CD4-positive, alpha-beta T cell (primary cell): ENCODE measurements at regions of chr11 and their contacts with region 1.

Region 1: DNA sequence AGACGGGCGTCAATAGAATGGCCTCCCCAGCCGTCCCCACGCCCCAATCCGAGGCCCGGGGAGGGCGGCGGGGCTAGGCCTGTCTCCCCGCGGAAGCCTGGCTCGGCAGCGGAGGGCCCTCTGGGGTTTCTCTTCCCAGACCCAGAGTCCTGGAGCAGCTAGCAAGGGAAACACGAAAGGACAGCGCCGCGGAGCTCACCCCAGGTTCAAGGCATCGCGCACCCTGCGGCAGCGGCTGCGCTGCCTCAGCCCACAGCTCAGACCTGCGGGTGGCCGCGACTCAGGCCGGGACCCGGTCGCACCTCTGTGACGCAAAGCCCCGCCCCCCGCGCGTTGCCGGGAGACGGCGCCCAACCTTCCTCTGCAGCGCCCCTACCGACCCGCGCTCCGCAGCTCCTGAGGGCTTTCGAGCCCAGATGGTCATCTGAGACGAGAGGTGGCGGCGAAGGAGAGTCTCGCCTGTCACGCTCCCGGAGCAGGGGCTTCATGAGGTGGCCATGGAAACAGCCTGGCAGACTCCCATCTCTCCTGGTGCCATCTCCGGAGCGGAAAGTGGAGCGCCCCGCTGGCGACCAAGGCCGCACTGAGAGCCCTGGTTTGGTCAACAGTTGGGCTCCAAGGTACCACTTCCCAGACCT is at the start of gene RNF141:
- DNase-seq: peak; percentile 85 to 97 (median 94)
- ATAC-seq: peak; percentile 97
- H3K4me3 ChIP-seq: peak within 1 kb of the TSS; percentile 70
- H3K4me3 Mint-ChIP-seq: peak within 1 kb of the TSS; percentile 93
- H3K27ac ChIP-seq: peak within 1 kb of the TSS; percentile 25 to 72
- H3K27ac Mint-ChIP-seq: peak within 1 kb of the TSS; percentile 77
- H3K4me1 ChIP-seq: peaks cover 13% of the 10 kb centered on the region
- H3K4me1 Mint-ChIP-seq: peaks cover 44% of the 10 kb centered on the region
- H3K27me3 ChIP-seq: no peaks in the 10 kb centered on the region
- H3K27me3 Mint-ChIP-seq: no peaks in the 10 kb centered on the region
- CTCF ChIP-seq: peak; percentile 87
- total RNA-seq, gene RNF141: 18.0 to 19.0 TPM

Region 2: DNA sequence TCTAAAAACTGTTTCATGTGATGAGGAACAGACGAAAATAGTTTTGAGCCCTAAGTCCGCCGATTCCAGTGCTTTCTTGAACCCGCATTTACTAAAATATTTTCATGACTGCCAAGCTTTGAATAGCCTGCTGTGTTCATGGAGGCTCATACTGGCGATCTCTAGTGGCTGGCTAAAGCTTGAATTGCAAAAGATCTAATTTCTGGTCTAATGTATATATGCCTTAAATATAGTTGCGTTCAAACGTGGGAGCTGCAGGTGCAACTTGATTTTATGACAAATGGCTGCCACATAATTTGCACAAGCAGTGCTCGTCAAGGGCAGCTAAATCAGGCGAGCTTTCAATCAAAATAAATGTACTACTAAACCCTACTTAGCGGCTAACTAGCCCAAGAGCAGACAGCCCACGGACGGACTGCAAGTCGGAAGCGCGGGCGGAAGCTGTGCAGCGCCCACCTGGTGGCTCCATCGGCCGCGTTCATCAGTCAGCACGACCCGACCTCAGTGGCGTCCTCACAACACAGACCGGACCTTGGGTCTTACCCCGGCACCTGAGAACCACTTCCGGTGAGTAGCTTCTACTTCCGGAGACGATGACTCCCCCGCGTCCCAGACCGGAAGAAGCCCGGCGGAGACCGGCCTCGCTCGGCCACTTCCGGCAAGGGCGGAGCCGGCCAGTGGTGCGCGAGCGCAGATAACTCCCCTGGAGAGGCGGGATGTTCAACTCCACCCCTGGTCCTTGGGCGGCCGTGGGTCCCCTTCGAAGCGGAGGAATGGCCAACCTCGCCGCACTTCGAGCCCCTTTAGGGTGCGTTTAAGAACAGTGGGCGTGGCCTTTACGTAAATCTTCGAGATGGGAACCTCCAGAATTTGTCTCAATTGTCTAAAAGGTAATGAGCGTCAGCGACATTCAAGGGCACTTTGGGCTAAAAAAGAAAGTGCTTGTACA is 1852.4 kb before region 1 on chr11:
- CTCF ChIA-PET with region 1: no interaction called
- POLR2A ChIA-PET with region 1: no interaction called
- intact Hi-C with region 1: loop called in 1 of 2 experiments (anchors 10 kb)
- DNase-seq: peak; percentile 46 to 89 (median 77)
- ATAC-seq: peak; percentile 76
- H3K4me3 ChIP-seq: peak overlapping the region; percentile 73
- H3K4me3 Mint-ChIP-seq: peak overlapping the region; percentile 96
- H3K27ac ChIP-seq: peak overlapping the region; percentile 73 to 84
- H3K27ac Mint-ChIP-seq: peak overlapping the region; percentile 90
- H3K4me1 ChIP-seq: peaks cover 26% of the 10 kb centered on the region
- H3K4me1 Mint-ChIP-seq: peaks cover 43% of the 10 kb centered on the region
- H3K27me3 ChIP-seq: no peaks in the 10 kb centered on the region
- H3K27me3 Mint-ChIP-seq: no peaks in the 10 kb centered on the region
- CTCF ChIP-seq: no peak

Region 3: DNA sequence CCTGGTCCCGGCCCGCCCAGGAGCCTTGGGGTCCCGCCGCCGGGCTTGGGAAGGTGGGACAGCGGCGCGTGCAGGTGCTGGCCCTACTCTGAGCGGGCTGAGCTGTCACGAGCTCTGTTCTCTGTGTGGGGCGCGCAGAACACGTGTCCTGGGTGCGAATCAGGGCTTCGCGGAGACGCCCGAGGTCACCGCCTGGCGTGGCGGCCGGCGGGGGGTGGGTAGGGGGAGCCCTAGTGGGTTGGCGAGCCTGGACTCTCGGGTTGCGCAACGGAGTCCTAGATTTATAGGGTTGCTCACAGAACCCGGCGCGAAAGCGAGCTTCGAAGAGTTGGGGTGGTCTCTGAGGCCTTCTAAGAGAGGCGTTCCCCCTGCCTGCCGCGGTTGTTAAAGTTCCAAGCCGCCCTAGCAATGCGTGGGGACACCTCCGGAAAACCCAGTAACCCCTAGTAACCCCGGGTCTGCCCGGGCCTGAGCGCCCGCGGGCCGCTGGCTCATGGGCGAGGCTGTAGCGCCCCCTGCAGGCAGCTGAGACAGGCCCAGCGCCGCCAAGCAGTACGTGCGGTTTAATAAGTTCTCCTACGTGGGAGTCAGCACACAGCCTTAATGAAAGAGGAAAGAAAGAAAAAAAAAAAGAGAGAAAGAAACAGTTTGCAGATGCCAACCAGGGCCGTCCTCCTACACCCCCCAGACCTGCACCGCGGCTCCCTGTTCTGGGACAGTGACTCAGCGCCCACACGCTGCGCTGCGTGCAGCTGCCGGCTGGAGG is 233.4 kb before region 1 on chr11:
- CTCF ChIA-PET with region 1: interaction called, 3 read pairs
- POLR2A ChIA-PET with region 1: no interaction called
- intact Hi-C with region 1: loop called in 1 of 2 experiments (anchors 10 kb)
- DNase-seq: peak; percentile 70 to 92 (median 80)
- ATAC-seq: peak; percentile 66
- H3K4me3 ChIP-seq: peak overlapping the region; percentile 63
- H3K4me3 Mint-ChIP-seq: peak overlapping the region; percentile 95
- H3K27ac ChIP-seq: no peak overlapping the region
- H3K27ac Mint-ChIP-seq: no peak overlapping the region
- H3K4me1 ChIP-seq: peaks cover 56% of the 10 kb centered on the region
- H3K4me1 Mint-ChIP-seq: peaks cover 40% of the 10 kb centered on the region
- H3K27me3 ChIP-seq: peaks cover 32 to 45% of the 10 kb centered on the region in 2 experiments
- H3K27me3 Mint-ChIP-seq: peaks cover 80% of the 10 kb centered on the region
- CTCF ChIP-seq: peak; percentile 98

Region 4: GRCh38 chr11:10413268-10413667 is 127.8 kb before region 1 on chr11:
- CTCF ChIA-PET with region 1: interaction called, 13 read pairs
- POLR2A ChIA-PET with region 1: interaction called, 13 read pairs
- intact Hi-C with region 1: loop called (anchors 2 to 5 kb)
- DNase-seq: peak; percentile 20 to 78 (median 44)
- ATAC-seq: peak; percentile 92
- H3K4me3 ChIP-seq: no peak overlapping the region
- H3K4me3 Mint-ChIP-seq: no peak overlapping the region
- H3K27ac ChIP-seq: no peak overlapping the region
- H3K27ac Mint-ChIP-seq: no peak overlapping the region
- H3K4me1 ChIP-seq: peaks cover 32% of the 10 kb centered on the region
- H3K4me1 Mint-ChIP-seq: peaks cover 50% of the 10 kb centered on the region
- H3K27me3 ChIP-seq: no peaks in the 10 kb centered on the region
- H3K27me3 Mint-ChIP-seq: no peaks in the 10 kb centered on the region
- CTCF ChIP-seq: peak; percentile 61

Region 5: GRCh38 chr11:10455637-10456487 is 85.2 kb before region 1 on chr11:
- CTCF ChIA-PET with region 1: interaction called, 22 read pairs
- POLR2A ChIA-PET with region 1: interaction called, 18 read pairs
- intact Hi-C with region 1: loop called (anchors 2 to 5 kb)
- DNase-seq: peak; percentile 50 to 87 (median 75)
- ATAC-seq: peak; percentile 71
- H3K4me3 ChIP-seq: peak overlapping the region; percentile 66
- H3K4me3 Mint-ChIP-seq: peak overlapping the region; percentile 93
- H3K27ac ChIP-seq: peak overlapping the region; percentile 63 to 89
- H3K27ac Mint-ChIP-seq: peak overlapping the region; percentile 95
- H3K4me1 ChIP-seq: peaks cover 77% of the 10 kb centered on the region
- H3K4me1 Mint-ChIP-seq: peaks cover 78% of the 10 kb centered on the region
- H3K27me3 ChIP-seq: no peaks in the 10 kb centered on the region
- H3K27me3 Mint-ChIP-seq: no peaks in the 10 kb centered on the region
- CTCF ChIP-seq: no peak

Region 6: GRCh38 chr11:10526974-10527918 is 13.8 kb before region 1 on chr11:
- CTCF ChIA-PET with region 1: interaction called, 21 read pairs
- POLR2A ChIA-PET with region 1: interaction called, 3 read pairs
- intact Hi-C with region 1: no loop called
- DNase-seq: no peak
- ATAC-seq: no peak
- H3K4me3 ChIP-seq: no peak overlapping the region
- H3K4me3 Mint-ChIP-seq: no peak overlapping the region
- H3K27ac ChIP-seq: no peak overlapping the region
- H3K27ac Mint-ChIP-seq: no peak overlapping the region
- H3K4me1 ChIP-seq: no peaks in the 10 kb centered on the region
- H3K4me1 Mint-ChIP-seq: peaks cover 8% of the 10 kb centered on the region
- H3K27me3 ChIP-seq: no peaks in the 10 kb centered on the region
- H3K27me3 Mint-ChIP-seq: no peaks in the 10 kb centered on the region
- CTCF ChIP-seq: no peak

Region 7: DNA sequence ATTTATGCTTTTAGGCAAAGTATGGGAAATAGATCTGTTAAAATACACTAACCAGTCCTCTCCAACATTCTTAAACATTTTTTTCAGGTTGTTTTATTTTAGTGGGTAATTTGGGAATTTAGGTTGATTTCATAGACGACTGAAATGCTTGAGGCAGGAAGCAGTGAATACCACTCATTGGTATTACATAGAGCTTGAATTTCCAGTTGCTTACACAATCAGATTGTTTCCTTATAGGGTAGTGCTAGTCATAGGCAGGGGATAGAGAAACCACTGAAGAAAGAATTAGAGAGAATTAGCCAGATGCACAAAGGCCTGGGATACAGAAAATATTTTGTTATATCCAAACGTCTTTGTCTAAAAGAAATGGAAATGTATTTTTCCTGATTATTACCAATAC is 51.3 kb after region 1 on chr11:
- CTCF ChIA-PET with region 1: no interaction called
- POLR2A ChIA-PET with region 1: no interaction called
- intact Hi-C with region 1: no loop called
- DNase-seq: peak in 2 of 14 experiments; percentile 19 to 26
- ATAC-seq: no peak
- H3K4me3 ChIP-seq: no peak overlapping the region
- H3K4me3 Mint-ChIP-seq: no peak overlapping the region
- H3K27ac ChIP-seq: no peak overlapping the region
- H3K27ac Mint-ChIP-seq: no peak overlapping the region
- H3K4me1 ChIP-seq: no peaks in the 10 kb centered on the region
- H3K4me1 Mint-ChIP-seq: no peaks in the 10 kb centered on the region
- H3K27me3 ChIP-seq: no peaks in the 10 kb centered on the region
- H3K27me3 Mint-ChIP-seq: peaks cover 5% of the 10 kb centered on the region
- CTCF ChIP-seq: no peak

Region 8: DNA sequence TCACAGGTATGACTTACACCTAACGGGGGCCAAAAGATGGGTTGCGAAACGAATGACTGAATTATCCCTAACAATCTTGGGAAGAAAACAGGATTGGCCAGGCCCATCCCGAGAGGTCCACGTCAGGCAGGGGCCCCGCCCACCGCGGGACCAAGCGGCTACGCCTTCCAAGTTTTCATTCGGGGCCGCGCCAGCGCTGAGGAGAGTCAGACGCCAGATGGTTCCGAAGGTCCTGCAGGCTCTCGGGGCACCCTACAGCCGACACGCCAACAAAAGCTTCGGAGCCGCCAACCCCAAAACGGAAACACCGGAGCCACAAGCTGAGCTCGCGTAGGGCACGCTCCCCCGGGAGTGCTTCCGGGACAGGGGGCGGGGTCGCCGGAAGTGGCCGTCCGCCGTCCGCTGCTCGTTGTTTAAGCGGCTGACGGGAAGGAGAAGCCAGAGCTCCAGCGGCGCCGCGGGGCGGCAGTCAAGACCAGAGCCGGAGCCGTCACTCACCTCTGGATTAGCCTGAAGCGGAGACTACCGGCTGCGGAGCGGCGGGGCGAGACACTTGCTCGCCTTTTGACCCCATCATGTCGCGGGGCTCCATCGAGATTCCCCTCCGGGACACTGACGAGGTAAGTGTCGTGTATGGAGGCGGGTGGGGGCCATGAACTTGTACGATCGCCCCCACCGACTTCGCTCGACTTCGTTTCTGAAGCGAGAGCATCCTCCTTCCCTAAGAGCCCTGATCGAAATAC is 210.0 kb after region 1 on chr11 and contains the start of gene CTR9:
- CTCF ChIA-PET with region 1: interaction called, 3 read pairs
- POLR2A ChIA-PET with region 1: interaction called, 3 read pairs
- intact Hi-C with region 1: loop called in 1 of 2 experiments (anchors 2 kb)
- DNase-seq: peak; percentile 82 to 96 (median 90)
- ATAC-seq: peak; percentile 86
- H3K4me3 ChIP-seq: peak within 1 kb of the TSS; percentile 95
- H3K4me3 Mint-ChIP-seq: peak within 1 kb of the TSS; percentile 97
- H3K27ac ChIP-seq: peak within 1 kb of the TSS; percentile 83 to 84
- H3K27ac Mint-ChIP-seq: peak within 1 kb of the TSS; percentile 93
- H3K4me1 ChIP-seq: peaks cover 14% of the 10 kb centered on the region
- H3K4me1 Mint-ChIP-seq: peaks cover 35% of the 10 kb centered on the region
- H3K27me3 ChIP-seq: no peaks in the 10 kb centered on the region
- H3K27me3 Mint-ChIP-seq: no peaks in the 10 kb centered on the region
- CTCF ChIP-seq: no peak
- total RNA-seq, gene CTR9: 34.0 to 34.7 TPM